ENCODE measurements at regions of chr13 and their contacts with region 1.

Region 1: GRCh38 chr13:46387064-46387851 is at the start of gene RUBCNL:
- DNase-seq: no peak
- ATAC-seq: peak; percentile 47
- H3K4me3 ChIP-seq: peak within 1 kb of the TSS; percentile 86
- H3K27ac ChIP-seq: peak within 1 kb of the TSS; percentile 85
- H3K4me1 ChIP-seq: peaks cover 31% of the 10 kb centered on the region
- H3K27me3 ChIP-seq: no peaks in the 10 kb centered on the region
- CTCF ChIP-seq: peak; percentile 2 to 39 (median 30); a peak in 3 of 6 replicates
- EP300 ChIP-seq: no peak
- POLR2A ChIP-seq: peak; percentile 65
- RAD21 ChIP-seq: peak; percentile 51
- polyA plus RNA-seq, gene RUBCNL: 21.4 to 28.5 TPM

Region 2: GRCh38 chr13:46369506-46370277 is 17.6 kb before region 1 on chr13:
- CTCF ChIA-PET with region 1: interaction called, 47 read pairs
- POLR2A ChIA-PET with region 1: interaction called, 12 read pairs
- RAD21 ChIA-PET with region 1: interaction called, 100 read pairs
- SMC1A ChIA-PET with region 1: interaction called, 81 read pairs
- in situ Hi-C with region 1: no loop called
- intact Hi-C with region 1: no loop called
- DNase-seq: no peak
- ATAC-seq: peak; percentile 78
- H3K4me3 ChIP-seq: peak overlapping the region; percentile 10
- H3K27ac ChIP-seq: peak overlapping the region; percentile 53
- H3K4me1 ChIP-seq: peaks cover 47% of the 10 kb centered on the region
- H3K27me3 ChIP-seq: no peaks in the 10 kb centered on the region
- CTCF ChIP-seq: no peak
- EP300 ChIP-seq: no peak
- POLR2A ChIP-seq: no peak
- RAD21 ChIP-seq: no peak

Region 3: DNA sequence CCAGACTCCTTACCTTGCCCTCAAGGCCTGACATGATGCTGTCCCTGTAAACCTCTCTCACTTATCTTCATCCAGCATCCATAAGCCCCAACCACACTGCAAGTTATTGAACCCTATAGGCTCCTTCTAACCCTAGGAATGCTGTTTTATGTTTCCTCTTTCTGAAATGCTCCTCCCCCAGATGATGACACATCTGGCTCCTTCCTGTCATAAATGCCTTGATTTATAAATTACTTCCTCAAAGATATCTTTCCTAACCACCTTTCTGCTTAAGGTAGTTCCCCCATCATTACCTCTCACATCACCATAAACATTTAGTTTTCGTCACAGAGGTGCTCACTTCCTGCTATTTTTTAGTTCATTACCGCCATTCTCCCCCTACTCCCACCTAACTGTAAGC is 12.5 kb before region 1 on chr13:
- CTCF ChIA-PET with region 1: interaction called, 47 read pairs
- POLR2A ChIA-PET with region 1: interaction called, 25 read pairs
- RAD21 ChIA-PET with region 1: interaction called, 100 read pairs
- SMC1A ChIA-PET with region 1: interaction called, 81 read pairs
- in situ Hi-C with region 1: no loop called
- intact Hi-C with region 1: no loop called
- DNase-seq: no peak
- ATAC-seq: peak; percentile 36
- H3K4me3 ChIP-seq: peak overlapping the region; percentile 15; the same call in 1 of the 2 replicates
- H3K27ac ChIP-seq: peak overlapping the region; percentile 45
- H3K4me1 ChIP-seq: peaks cover 84% of the 10 kb centered on the region
- H3K27me3 ChIP-seq: no peaks in the 10 kb centered on the region
- CTCF ChIP-seq: no peak
- EP300 ChIP-seq: peak in 1 of 2 experiments; percentile 36; a peak in 1 of 4 replicates
- POLR2A ChIP-seq: no peak
- RAD21 ChIP-seq: no peak

Region 4: GRCh38 chr13:46403851-46404732 is 16.8 kb after region 1 on chr13:
- CTCF ChIA-PET with region 1: interaction called, 3 read pairs
- POLR2A ChIA-PET with region 1: no interaction called
- RAD21 ChIA-PET with region 1: no interaction called
- SMC1A ChIA-PET with region 1: interaction called, 10 read pairs
- in situ Hi-C with region 1: no loop called
- intact Hi-C with region 1: no loop called
- DNase-seq: no peak
- ATAC-seq: no peak
- H3K4me3 ChIP-seq: no peak overlapping the region
- H3K27ac ChIP-seq: no peak overlapping the region
- H3K4me1 ChIP-seq: no peaks in the 10 kb centered on the region; the same call in 1 of the 2 replicates
- H3K27me3 ChIP-seq: no peaks in the 10 kb centered on the region
- CTCF ChIP-seq: no peak
- EP300 ChIP-seq: no peak
- POLR2A ChIP-seq: no peak
- RAD21 ChIP-seq: no peak

Region 5: DNA sequence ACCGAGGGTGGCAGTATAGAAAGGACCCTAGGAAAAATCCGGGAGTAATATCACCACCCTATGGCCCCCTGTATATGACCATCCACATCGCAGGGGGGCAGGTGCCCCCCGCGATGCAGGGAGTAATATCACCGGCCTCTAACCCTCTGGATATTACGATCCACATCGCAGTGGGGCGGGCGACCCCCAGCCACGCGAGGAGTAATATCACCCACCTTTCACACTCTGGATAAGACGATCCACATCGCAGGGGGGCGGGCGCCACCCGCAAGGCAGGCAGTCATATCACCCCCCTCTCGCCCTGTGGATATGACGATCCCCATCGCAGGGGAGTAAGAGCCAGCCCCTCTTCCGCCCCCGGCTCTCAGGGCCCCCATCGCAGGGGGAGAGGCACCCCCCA is 76.5 kb after region 1 on chr13:
- CTCF ChIA-PET with region 1: no interaction called
- POLR2A ChIA-PET with region 1: no interaction called
- RAD21 ChIA-PET with region 1: no interaction called
- SMC1A ChIA-PET with region 1: interaction called, 3 read pairs
- in situ Hi-C with region 1: no loop called
- intact Hi-C with region 1: loop called (anchors 10 kb)
- DNase-seq: no peak
- ATAC-seq: no peak
- H3K4me3 ChIP-seq: no peak overlapping the region
- H3K27ac ChIP-seq: no peak overlapping the region
- H3K4me1 ChIP-seq: no peaks in the 10 kb centered on the region
- H3K27me3 ChIP-seq: no peaks in the 10 kb centered on the region
- CTCF ChIP-seq: no peak
- EP300 ChIP-seq: no peak
- POLR2A ChIP-seq: no peak
- RAD21 ChIP-seq: no peak

Region 6: GRCh38 chr13:46992383-46992952 is 605.2 kb after region 1 on chr13:
- CTCF ChIA-PET with region 1: no interaction called
- POLR2A ChIA-PET with region 1: no interaction called
- RAD21 ChIA-PET with region 1: no interaction called
- SMC1A ChIA-PET with region 1: no interaction called
- in situ Hi-C with region 1: no loop called
- intact Hi-C with region 1: no loop called
- DNase-seq: no peak
- ATAC-seq: peak; percentile 88
- H3K4me3 ChIP-seq: no peak overlapping the region
- H3K27ac ChIP-seq: no peak overlapping the region
- H3K4me1 ChIP-seq: peaks cover 17% of the 10 kb centered on the region
- H3K27me3 ChIP-seq: no peaks in the 10 kb centered on the region
- CTCF ChIP-seq: peak; percentile 31 to 49 (median 47)
- EP300 ChIP-seq: no peak
- POLR2A ChIP-seq: no peak
- RAD21 ChIP-seq: peak; percentile 49

Measured in GM12878 (cell line).